Adrenal gland (tissue), 19 donors: ENCODE measurements at regions of chr7 and their contacts with region 1.

Region 1: DNA sequence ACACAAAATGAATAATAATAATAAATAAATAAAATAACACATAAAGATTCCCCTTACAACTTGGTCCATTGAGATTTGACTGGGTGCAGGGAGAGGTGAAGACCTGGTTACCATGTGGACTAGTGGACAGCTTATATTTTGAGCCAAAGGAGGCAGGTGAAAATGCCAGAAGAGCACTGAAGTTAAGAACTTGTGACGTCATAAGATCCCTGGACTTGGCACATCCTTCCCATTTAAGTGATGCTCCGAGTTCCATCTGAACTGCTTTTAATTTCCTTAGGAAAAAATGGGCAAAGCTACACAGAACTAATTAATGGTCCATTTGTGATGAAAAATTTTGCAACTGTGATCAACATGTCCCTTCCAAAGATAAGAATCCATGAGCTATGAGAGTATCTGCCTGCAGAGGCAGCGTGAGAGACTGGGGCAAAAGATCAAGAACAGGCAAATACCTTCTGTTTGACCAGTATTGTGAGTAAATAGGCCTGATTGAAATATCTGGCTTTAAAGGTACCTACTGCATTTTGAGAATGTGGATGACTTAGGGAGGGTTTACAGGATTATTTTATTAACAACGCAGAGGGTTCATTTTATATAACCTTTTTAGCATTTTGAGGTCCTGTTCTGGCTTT is 101.2 kb upstream of the POT1 start:
- DNase-seq: no peak
- H3K4me3 ChIP-seq: no peak overlapping the region
- H3K27ac ChIP-seq: no peak overlapping the region
- H3K4me1 ChIP-seq: no peaks in the 10 kb centered on the region
- H3K27me3 ChIP-seq: no peaks in the 10 kb centered on the region
- CTCF ChIP-seq: no peak
- POLR2A ChIP-seq: no peak

Region 2: DNA sequence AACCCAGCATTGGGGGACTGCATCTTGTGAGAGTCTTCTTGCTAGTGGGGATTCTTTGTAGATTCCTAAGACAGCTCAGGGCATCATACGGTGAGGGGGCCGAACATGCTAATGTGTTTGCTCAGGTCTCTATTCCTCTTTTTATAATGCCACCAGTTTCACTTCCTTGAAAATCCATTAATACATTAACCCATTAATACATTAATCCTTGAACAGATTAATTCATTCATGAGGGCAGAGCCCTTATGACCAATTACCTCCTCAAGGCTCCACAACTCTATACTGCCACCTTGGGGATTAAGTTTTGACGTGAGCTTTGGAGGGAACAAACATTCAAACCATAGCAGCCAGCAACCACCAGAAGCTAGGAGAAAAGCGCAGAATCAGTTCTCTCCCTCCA is 34.1 kb before region 1 on chr7:
- intact Hi-C with region 1: loop called in 1 of 2 experiments (anchors 2 kb)
- DNase-seq: no peak
- H3K4me3 ChIP-seq: no peak overlapping the region
- H3K27ac ChIP-seq: no peak overlapping the region
- H3K4me1 ChIP-seq: peaks cover 0 to 3% of the 10 kb centered on the region in 2 donors
- H3K27me3 ChIP-seq: no peaks in the 10 kb centered on the region
- CTCF ChIP-seq: no peak
- POLR2A ChIP-seq: no peak